ENCODE measurements at regions of chr9 and their contacts with region 1.

Region 1: GRCh38 chr9:32579706-32580331 is 6.9 kb upstream of the NDUFB6 start:
- DNase-seq: peak; percentile 54 to 87 (median 66)
- ATAC-seq: peak; percentile 58 to 88 (median 80)
- H3K4me3 ChIP-seq: no peak overlapping the region
- H3K27ac ChIP-seq: no peak overlapping the region
- H3K4me1 ChIP-seq: no peaks in the 10 kb centered on the region
- H3K27me3 ChIP-seq: no peaks in the 10 kb centered on the region
- CTCF ChIP-seq: peak; percentile 53 to 90 (median 84)

Region 2: DNA sequence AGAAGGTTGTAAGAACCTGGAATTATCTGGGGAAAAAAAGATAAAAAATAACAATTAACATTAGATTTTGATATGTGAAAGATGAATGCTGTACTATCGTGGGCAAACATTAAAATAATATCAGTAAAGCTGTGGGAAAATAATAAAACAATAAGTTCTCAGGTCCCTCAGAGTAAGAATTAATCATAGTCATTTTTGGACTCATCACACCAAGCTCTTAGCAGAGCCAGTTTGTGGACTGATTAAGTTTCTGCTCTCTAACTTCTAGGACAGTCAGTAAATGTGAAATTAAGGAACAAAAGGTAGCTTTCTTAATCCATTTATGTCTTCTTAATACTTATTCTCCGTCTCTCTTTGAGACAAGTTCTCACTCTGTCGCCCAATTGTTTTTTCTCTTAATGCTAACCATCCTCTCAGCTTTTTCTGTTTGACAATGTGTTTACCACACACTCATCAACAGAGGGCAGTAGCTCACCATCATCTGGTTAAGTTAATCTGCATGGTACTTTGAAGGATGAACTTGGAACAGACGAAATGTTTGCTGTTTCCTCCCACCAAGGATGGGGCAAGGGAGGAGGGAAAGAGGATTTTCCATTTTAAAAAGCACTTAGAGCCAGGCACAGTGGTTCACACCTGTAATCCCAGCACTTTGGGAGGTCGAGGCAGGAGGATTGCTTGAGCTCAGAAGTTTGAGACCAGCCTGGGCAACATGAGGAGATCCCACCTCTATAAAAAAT is 200.7 kb before region 1 on chr9:
- intact Hi-C with region 1: loop called (anchors 5 to 10 kb)
- DNase-seq: peak in 3 of 6 donors; percentile 38 to 59 (median 53)
- ATAC-seq: peak; percentile 89 to 96 (median 94)
- H3K4me3 ChIP-seq: no peak overlapping the region
- H3K27ac ChIP-seq: no peak overlapping the region
- H3K4me1 ChIP-seq: no peaks in the 10 kb centered on the region
- H3K27me3 ChIP-seq: no peaks in the 10 kb centered on the region
- CTCF ChIP-seq: peak; percentile 24 to 61 (median 50)

Region 3: GRCh38 chr9:32384364-32385151 is 195.3 kb before region 1 on chr9 and contains the start of gene ACO1:
- intact Hi-C with region 1: loop called (anchors 5 to 10 kb)
- DNase-seq: peak; percentile 89 to 97 (median 94)
- ATAC-seq: peak; percentile 93 to 98 (median 96)
- H3K4me3 ChIP-seq: peak within 1 kb of the TSS; percentile 54 to 89 (median 80)
- H3K27ac ChIP-seq: peak within 1 kb of the TSS; percentile 73 to 87 (median 85)
- H3K4me1 ChIP-seq: peaks cover 25 to 32% (median 29%) of the 10 kb centered on the region in 3 donors
- H3K27me3 ChIP-seq: no peaks in the 10 kb centered on the region
- CTCF ChIP-seq: no peak
- total RNA-seq, gene ACO1: 27.0 to 35.6 (median 31.2) TPM

Region 4: DNA sequence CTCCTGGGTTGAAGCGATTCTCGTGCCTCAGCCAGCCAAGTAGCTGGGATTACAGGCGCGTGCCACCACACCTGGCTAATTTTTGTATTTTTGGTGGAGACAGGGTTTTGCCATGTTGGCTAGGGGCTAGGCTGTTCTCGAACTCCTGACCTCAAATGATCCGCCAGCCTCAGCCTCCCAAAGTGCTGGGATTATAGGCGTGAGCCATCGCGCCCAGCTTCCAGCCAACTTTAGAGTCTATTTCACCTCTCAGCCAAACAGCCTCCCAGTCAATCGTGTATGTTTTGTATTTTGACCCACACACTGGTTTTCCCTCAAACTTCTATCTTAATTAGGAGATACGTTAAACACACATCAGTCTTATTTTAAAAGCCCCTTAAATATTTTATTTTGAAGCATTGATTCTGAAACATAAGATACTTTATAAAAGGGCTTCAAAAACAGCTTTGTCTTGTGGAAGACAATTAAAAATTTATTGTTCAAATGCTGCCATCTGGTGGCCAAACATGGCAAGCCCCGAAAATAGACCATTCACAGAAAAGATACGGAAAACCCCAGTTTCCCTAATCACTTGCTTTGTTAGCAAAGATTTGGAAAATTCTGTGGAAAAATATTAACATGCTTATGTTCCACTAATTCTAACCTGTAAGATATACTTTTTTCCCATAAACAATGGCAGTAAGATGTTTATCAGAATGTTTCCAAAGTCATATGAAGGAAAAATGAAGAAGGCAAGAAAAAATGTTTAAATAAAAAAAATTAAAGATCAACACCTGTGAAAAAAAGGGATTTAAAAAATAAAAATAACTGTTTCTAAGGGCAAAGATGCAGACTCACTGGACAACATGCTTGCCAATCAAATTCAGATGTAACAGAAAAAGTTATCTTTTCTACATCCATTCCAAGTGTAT is 388.5 kb after region 1 on chr9:
- intact Hi-C with region 1: loop called in 2 of 3 experiments (anchors 5 kb)
- DNase-seq: peak in 4 of 6 donors; percentile 18 to 82 (median 46)
- ATAC-seq: peak in 3 of 4 donors; percentile 59 to 72 (median 70)
- H3K4me3 ChIP-seq: no peak overlapping the region
- H3K27ac ChIP-seq: no peak overlapping the region
- H3K4me1 ChIP-seq: no peaks in the 10 kb centered on the region
- H3K27me3 ChIP-seq: no peaks in the 10 kb centered on the region
- CTCF ChIP-seq: peak; percentile 64 to 88 (median 73)